ENCODE measurements at regions of chr3 and their contacts with region 1.

Region 1: DNA sequence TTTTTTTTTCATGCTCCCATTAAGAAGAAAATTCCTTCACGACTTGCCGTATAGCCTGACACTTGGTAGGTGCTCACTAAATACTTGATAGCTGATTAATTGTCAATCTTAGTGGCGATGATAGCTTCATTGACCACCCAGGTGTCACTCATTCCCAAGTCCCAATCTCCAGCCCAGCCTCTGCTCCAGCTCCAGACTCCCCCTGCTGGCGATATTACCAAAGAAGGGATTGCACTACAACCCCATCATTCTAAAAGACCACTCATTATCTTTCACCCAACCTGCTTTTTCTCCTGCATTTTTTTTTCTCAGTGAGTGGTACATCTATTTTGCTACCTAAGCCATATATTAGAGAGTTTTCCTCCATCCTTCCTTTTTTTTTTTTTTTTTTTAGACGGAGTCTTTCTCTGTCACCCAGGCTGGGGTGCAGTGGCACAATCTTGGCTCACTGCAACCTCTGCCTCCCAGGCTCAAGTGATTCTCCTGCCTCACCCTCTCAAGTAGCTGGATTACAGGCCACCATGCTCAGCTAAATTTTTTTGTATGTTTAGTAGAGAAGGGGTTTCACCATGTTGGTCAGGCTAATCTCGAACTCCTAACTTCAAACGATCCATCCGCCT is 19.5 kb upstream of the COMMD2 start:
- DNase-seq: no peak
- H3K4me3 ChIP-seq: no peak overlapping the region
- H3K27ac ChIP-seq: no peak overlapping the region
- H3K27me3 ChIP-seq: peaks cover 5% of the 10 kb centered on the region
- CTCF ChIP-seq: peak; percentile 85

Region 2: GRCh38 chr3:149395107-149395713 is 376.6 kb before region 1 on chr3:
- CTCF ChIA-PET with region 1: interaction called, 10 read pairs
- POLR2A ChIA-PET with region 1: no interaction called
- DNase-seq: no peak
- H3K4me3 ChIP-seq: no peak overlapping the region
- H3K27ac ChIP-seq: no peak overlapping the region
- H3K27me3 ChIP-seq: no peaks in the 10 kb centered on the region
- CTCF ChIP-seq: no peak

Region 3: DNA sequence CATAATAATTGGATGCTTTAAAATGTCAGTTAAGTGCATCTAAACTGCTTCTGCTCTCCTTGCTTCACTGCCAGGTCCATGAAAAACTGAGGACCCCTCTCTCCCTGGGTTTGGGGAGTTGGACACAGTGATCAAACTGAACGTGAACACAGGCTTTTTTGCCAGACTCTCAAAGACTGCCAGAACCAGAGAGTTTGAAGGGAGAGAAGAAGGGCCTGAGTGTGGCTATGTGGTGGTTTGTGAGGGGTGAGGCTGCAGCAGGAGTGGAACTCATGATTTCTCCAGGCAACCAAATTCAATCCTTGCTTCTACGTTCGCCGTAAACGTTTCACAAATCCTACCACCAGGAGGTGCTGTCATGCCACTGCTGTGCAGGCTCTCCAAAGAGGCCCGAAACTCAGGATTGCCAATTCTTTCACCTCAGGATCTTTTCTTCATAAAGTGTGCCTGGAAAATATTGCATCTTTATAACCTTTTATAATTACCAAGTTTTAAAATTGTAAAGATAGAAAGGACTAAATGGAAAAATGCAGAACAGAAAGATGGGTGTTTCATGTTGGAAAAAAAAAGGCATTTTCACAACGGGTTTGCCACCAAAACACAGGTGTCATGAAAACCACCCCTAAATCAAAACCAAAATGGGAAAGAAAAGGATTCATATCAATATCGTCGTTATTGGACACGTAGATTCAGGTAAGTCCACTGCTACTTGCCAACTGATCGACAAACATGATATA is 277.6 kb before region 1 on chr3:
- CTCF ChIA-PET with region 1: interaction called, 19 read pairs
- POLR2A ChIA-PET with region 1: interaction called, 8 read pairs
- DNase-seq: no peak
- H3K4me3 ChIP-seq: no peak overlapping the region
- H3K27ac ChIP-seq: no peak overlapping the region
- H3K27me3 ChIP-seq: no peaks in the 10 kb centered on the region
- CTCF ChIP-seq: peak; percentile 92

Region 4: DNA sequence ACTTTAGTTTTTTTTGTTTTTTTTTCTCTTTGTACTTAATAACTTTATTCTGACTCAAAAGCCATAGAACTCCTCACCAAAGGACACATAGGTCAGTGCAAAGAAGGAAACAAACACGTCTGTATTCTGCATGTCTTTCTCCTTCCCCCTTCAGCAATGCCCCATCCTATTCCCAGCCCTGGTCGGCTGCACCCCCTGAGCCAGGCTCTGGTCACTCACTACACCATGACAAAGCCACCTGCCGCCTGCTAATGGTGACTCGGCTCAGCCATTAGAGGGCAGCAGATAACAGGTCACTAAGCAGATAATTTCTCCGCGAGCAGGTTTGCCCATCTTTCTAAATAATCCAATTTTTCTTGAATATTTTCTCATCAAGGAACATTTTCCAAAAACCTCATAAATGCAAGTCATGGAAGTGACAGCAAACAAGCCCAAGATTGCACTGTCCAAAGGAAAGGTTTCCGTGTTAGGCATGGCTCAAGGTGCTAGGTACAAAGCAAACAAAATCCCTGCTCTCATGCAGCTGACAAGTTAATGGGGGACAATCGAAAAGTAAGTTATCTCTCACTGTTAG is 259.5 kb before region 1 on chr3:
- CTCF ChIA-PET with region 1: interaction called, 22 read pairs
- POLR2A ChIA-PET with region 1: no interaction called
- DNase-seq: no peak
- H3K4me3 ChIP-seq: no peak overlapping the region
- H3K27ac ChIP-seq: no peak overlapping the region
- H3K27me3 ChIP-seq: no peaks in the 10 kb centered on the region
- CTCF ChIP-seq: peak; percentile 79

Region 5: DNA sequence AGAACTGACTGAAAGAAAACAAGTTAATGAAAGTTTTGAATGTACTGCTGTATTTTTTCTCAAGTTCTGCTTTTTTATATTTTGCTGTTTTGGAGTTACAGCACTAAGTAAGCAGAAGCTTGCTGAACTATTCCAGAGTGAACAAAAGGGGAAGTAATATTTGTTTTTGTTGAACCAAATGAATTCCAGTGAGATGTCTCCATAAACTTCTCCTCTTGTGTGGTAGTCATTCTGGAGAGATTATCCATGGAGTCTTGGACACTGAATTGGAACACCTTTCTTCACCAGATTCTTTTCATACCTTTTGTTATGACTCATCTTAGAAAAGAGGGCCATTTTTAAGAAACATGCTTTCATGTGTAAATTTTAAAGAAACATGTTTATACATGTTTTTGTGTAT is 11.8 kb after region 1 on chr3:
- CTCF ChIA-PET with region 1: interaction called, 61 read pairs
- POLR2A ChIA-PET with region 1: no interaction called
- DNase-seq: peak; percentile 72
- H3K4me3 ChIP-seq: no peak overlapping the region
- H3K27ac ChIP-seq: no peak overlapping the region
- H3K27me3 ChIP-seq: no peaks in the 10 kb centered on the region
- CTCF ChIP-seq: no peak

Region 6: GRCh38 chr3:149790268-149790667 is 18.5 kb after region 1 on chr3:
- CTCF ChIA-PET with region 1: interaction called, 20 read pairs
- POLR2A ChIA-PET with region 1: no interaction called
- DNase-seq: no peak
- H3K4me3 ChIP-seq: no peak overlapping the region
- H3K27ac ChIP-seq: no peak overlapping the region
- H3K27me3 ChIP-seq: no peaks in the 10 kb centered on the region
- CTCF ChIP-seq: no peak

Region 7: GRCh38 chr3:149796026-149796425 is 24.3 kb after region 1 on chr3:
- CTCF ChIA-PET with region 1: interaction called, 20 read pairs
- POLR2A ChIA-PET with region 1: no interaction called
- DNase-seq: no peak
- H3K4me3 ChIP-seq: no peak overlapping the region
- H3K27ac ChIP-seq: no peak overlapping the region
- H3K27me3 ChIP-seq: no peaks in the 10 kb centered on the region
- CTCF ChIP-seq: no peak

Region 8: GRCh38 chr3:149936812-149937233 is 165.1 kb after region 1 on chr3:
- CTCF ChIA-PET with region 1: no interaction called
- POLR2A ChIA-PET with region 1: no interaction called
- DNase-seq: no peak
- H3K4me3 ChIP-seq: no peak overlapping the region
- H3K27ac ChIP-seq: no peak overlapping the region
- H3K27me3 ChIP-seq: no peaks in the 10 kb centered on the region
- CTCF ChIP-seq: peak; percentile 84

Measured in AG04450 (cell line).